Activated T-helper 1 cell treated with anti-CD3 and anti-CD28 coated beads, Interleukin-12 subunit alpha, Interleukin-12 subunit beta, Interleukin-2, Interleukin-4 antibody, amounts not matched to agents 30 ng/mL and 10 ng/mL and 1 ng/mL, durations not matched to agents 14 hours and 24 hours and 36 hours (primary cell): ENCODE measurements at regions of chr6 and their contacts with region 1.

Region 1: DNA sequence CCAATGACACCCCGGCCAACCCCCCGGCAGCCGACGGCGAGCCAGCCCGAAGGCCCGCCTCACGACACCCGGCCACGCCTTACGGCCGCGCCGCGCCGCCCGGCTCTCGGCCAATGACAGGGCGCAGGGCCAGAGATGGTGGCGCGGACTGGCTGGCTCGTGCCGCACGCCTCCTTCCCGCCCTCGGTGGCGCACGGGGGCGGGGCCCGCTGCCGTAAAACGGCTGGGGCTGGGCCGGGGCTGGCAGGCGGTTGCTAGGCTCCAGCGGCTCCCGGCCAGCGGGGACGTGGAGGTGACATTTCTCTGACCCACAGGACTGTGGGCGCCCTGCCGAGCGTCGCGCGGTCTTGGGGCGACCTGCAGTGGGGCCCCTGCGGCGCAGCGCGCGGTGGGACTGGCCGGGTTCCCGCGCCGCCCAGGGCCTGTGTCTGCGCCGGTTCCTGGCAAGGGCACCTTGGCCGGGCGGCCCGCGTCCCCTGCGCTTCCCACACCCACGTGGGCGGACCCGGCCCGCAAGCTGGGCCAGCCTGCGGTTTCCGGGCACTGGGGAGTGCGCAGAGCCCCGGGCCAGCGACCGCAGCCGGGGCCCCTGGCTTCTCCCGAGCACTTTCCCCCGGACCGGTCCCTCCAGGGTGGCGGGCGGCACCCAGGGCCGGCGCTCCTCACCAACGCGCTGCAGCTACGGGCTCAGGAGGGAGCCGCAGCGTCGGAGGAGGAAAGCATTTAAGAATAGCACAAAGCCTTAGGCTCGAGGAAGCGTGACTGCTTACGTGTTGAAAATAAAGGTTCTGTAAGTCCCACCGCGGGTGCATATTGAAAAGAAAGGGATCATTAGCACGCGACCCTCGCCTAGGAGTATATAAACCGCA is at the start of gene MPC1:
- DNase-seq: peak; percentile 95
- H3K4me3 Mint-ChIP-seq: peak within 1 kb of the TSS; percentile 91
- H3K27ac Mint-ChIP-seq: peak within 1 kb of the TSS; percentile 48
- H3K4me1 Mint-ChIP-seq: peaks cover 19% of the 10 kb centered on the region
- H3K27me3 Mint-ChIP-seq: peaks cover 8% of the 10 kb centered on the region
- total RNA-seq, gene MPC1: 17.3 and 19.1 TPM in 2 replicates

Region 2: DNA sequence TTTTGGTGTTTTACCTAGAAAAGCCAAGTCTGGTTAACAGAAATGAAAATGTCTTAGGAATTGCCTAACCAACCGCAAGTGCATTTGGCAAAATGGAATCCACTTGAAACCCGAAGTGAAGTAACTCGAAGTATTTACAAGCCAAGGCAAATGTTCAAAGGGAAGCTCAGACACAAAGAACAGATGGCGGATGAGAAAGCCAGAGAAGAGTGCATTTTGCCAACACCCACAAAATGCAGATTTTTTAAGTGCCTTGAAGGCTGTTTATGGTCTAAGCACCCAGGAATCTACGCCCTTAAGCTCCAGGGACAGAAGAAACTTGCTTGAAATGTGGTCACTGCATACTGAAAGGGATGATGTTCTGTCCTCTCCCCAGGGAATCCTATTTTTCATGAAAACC is 145.6 kb before region 1 on chr6:
- intact Hi-C with region 1: no loop called
- DNase-seq: no peak
- H3K4me3 Mint-ChIP-seq: no peak overlapping the region
- H3K27ac Mint-ChIP-seq: no peak overlapping the region
- H3K4me1 Mint-ChIP-seq: peaks cover 10% of the 10 kb centered on the region
- H3K27me3 Mint-ChIP-seq: peaks cover 44% of the 10 kb centered on the region

Region 3: GRCh38 chr6:166275714-166276166 is 107.4 kb before region 1 on chr6:
- intact Hi-C with region 1: loop called (anchors 1 kb)
- DNase-seq: peak; percentile 71
- H3K4me3 Mint-ChIP-seq: no peak overlapping the region
- H3K27ac Mint-ChIP-seq: no peak overlapping the region
- H3K4me1 Mint-ChIP-seq: peaks cover 6% of the 10 kb centered on the region
- H3K27me3 Mint-ChIP-seq: peaks cover 15% of the 10 kb centered on the region

Region 4: DNA sequence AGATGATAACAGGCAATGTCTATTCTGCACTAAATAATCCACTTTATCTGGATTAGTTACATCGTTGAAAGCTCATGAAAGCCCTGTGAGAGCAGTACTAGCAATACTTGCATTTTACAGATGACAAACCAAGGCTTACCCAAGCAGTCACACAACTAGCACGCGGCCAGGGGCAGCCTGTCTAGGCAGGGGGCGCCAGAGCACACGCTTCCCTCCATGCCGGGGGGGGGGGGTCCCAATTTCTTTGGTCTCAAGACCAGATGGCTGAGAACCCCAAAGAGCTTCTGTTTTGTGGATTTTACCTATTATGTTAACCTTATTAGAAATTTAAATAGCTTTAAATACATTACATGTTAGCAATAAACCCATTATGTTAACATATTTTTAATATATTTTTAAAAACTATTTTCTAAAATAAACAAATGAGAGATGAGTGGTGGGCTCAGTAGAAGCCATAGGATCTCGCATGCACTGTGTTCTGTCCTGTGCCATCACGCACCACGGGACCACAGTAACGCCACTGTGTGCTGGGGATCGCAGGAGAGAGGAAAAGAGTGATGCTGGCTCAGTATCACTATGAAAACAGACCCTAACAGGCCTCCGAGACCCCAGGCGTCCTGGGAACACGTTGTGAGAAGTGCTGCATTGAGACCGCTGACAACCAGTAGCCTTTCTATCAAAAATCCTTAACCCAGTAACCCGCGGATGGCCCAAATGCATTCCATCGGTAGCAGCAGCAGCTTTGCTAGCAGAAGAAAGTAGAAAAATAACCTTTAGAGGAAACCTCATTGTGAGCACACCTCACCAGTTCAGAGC is 69.7 kb before region 1 on chr6:
- intact Hi-C with region 1: loop called (anchors 1 kb)
- DNase-seq: no peak
- H3K4me3 Mint-ChIP-seq: no peak overlapping the region
- H3K27ac Mint-ChIP-seq: no peak overlapping the region
- H3K4me1 Mint-ChIP-seq: no peaks in the 10 kb centered on the region
- H3K27me3 Mint-ChIP-seq: peaks cover 23% of the 10 kb centered on the region

Region 5: GRCh38 chr6:166402582-166403277 is 19.6 kb after region 1 on chr6:
- intact Hi-C with region 1: loop called (anchors 1 kb)
- DNase-seq: no peak
- H3K4me3 Mint-ChIP-seq: no peak overlapping the region
- H3K27ac Mint-ChIP-seq: no peak overlapping the region
- H3K4me1 Mint-ChIP-seq: peaks cover 5% of the 10 kb centered on the region
- H3K27me3 Mint-ChIP-seq: peaks cover 10% of the 10 kb centered on the region

Region 6: DNA sequence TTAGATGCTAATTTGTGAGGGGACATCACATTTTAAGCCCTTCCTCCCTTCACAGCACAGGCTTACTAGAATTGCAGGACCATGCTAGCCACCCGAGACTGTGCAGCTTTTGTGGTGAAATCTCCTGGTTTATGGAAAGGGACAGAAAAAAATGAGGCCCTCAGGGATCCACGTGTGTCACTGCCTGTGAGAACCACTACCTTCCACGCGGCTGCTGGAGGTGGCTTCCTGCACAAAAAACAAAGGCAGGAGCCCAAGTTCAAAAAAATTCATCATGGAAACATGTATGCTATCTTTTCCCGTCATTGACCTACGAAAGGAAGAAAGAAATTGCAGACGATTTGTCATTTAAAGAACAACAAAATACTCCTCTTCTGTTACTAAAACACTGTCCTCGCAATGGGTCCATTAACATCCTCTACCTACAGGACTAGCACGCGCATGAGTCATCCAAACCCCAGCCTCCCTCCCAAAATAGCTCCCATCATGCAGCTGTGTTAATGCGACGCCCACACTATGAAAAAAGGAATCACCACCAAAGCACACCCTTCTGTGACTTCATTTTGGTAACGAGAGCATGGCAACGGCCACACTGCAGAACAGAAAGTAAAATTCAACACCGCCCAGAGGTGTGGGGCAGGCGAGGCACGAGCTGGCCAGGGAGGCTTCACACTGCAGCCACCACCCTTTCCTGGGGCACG is 157.6 kb after region 1 on chr6:
- intact Hi-C with region 1: loop called (anchors 1 kb)
- DNase-seq: peak; percentile 39
- H3K4me3 Mint-ChIP-seq: peak overlapping the region; percentile 72
- H3K27ac Mint-ChIP-seq: peak overlapping the region; percentile 86
- H3K4me1 Mint-ChIP-seq: peaks cover 26% of the 10 kb centered on the region
- H3K27me3 Mint-ChIP-seq: peaks cover 5% of the 10 kb centered on the region

Region 7: GRCh38 chr6:166956444-166957086 is 573.4 kb after region 1 on chr6 and contains the start of gene RNASET2:
- intact Hi-C with region 1: loop called (anchors 5 kb)
- DNase-seq: peak; percentile 98
- H3K4me3 Mint-ChIP-seq: peak within 1 kb of the TSS; percentile 92
- H3K27ac Mint-ChIP-seq: peak within 1 kb of the TSS; percentile 91
- H3K4me1 Mint-ChIP-seq: peaks cover 74% of the 10 kb centered on the region
- H3K27me3 Mint-ChIP-seq: no peaks in the 10 kb centered on the region
- total RNA-seq, gene RNASET2: 99.5 TPM in 2 replicates

Region 8: DNA sequence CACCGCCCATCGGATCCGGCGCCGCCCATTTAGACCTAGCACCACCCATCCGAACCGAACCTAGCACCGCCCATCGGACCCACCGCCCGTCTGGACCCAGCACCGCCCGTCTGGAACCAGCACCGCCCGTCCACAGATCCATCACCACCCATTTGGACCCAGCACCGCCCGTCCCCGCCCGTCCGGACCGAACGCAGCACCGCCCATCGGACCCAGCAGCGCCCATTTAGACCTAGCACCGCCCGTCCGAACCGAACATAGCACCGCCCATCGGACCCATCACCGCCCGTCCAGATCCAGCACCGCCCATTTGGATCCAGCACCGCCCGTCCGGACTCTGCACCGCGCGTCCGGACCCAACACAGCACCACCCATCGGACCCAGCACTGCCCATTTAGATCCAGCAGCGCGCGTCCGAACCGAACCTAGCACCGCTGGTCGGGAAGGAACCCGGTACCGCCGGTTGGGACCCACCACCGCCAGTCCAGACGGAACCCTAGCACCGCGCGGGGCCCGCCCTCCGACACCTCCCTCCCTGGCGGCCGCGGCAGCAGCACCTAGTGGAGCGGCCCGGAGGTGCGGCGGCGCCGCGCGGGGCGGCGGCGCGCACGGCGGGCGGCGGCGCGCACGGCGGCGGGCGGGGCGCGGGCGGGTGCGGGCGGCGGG is 1443.2 kb after region 1 on chr6:
- intact Hi-C with region 1: loop called (anchors 5 kb)
- DNase-seq: peak; percentile 65
- H3K4me3 Mint-ChIP-seq: peak overlapping the region; percentile 89
- H3K27ac Mint-ChIP-seq: peak overlapping the region; percentile 61
- H3K4me1 Mint-ChIP-seq: peaks cover 52% of the 10 kb centered on the region
- H3K27me3 Mint-ChIP-seq: peaks cover 67% of the 10 kb centered on the region